Right ventricle myocardium inferior (tissue), 1 donor: ENCODE measurements at regions of chr11 and their contacts with region 1.

Region 1: DNA sequence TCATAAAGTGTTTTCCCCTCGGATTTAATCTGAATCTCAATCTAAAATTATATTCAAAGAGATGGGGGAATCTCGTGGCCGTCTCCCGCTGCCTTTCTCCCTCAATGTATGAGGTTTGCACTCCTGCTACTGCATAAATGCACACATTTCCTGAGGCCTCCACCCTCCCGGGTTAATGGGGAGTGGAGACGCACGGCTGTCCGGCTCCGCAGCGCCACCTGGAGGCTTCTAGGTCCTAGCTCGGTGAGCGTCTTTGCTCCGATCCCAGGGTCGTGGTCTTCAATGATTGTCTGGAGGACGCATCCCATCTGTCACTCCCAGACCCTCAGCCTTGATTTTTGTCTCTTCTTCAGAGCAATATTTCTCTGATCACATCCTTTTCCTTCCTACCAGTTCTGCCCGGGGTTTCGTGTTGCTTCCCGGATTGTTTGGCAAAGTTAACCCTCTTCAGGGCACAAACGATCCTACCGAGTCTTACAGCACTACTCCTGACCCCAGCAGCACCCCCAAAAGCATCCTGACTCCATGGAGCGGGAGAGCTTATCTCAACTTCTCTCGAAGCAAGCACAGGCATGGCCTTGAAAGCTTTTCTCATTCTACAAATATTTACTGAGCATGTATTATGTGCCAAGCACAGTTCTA is at the start of gene LMO1:
- DNase-seq: peak; percentile 86
- ATAC-seq: peak; percentile 71
- total RNA-seq, gene LMO1: 3.6 TPM

Region 2: GRCh38 chr11:8192016-8192895 is 71.6 kb before region 1 on chr11:
- intact Hi-C with region 1: loop called (anchors 2 kb)
- DNase-seq: no peak
- ATAC-seq: peak; percentile 74

Region 3: DNA sequence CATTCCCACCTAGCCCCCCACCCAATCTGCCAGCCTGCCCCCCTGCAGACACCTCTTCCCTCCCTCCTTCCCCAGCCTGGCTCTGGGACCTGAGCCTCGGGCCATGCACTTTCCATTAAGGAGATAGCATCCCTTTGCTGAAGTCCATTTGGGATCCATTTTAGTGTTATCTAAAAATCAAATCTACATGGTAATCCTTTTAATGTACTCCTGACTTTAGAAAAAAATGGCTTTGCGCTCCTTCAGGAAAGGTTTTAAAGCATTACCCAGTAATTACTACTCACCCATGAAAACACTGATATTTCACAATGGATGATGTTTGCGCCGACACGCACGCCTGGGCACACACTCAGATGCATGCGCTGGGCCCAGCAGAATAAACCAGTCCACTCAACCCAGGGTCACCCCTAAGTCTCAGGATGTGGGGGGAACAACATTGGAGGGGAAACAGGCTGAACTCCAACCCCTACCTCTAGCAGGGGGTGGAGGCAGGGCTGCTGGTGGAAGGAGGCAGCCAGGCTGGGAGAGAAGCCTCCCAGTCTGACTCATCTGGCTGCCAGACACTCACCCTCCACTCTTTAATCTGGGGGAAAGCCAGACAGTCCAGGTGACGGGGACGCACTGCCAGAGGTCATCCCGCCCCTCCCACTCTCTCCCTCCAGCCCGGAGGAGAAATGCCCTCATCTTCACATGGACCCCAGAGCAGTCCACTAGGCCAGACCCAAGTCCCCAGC is 30.0 kb before region 1 on chr11:
- intact Hi-C with region 1: no loop called
- DNase-seq: no peak
- ATAC-seq: peak; percentile 47

Region 4: DNA sequence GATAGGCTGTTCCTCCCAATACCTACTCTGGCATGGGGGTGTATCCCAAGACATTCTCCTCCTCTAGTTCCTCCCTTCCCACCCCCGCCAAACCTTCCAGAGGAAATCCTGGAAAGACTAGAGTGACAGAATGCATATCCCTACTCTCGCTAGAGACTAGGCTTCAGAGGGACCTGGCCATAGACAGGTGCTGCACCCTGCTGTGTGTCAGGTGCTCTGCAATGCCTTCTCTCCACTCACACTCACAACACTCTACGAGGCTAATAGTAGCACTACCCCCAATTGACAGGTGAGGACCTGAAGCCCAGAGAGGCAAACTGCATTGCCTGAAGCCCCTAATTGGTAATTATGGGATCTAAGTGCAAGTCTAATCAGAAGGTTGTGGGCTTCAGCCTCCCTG is 46.0 kb after region 1 on chr11:
- intact Hi-C with region 1: loop called (anchors 2 kb)
- DNase-seq: no peak
- ATAC-seq: peak; percentile 48

Region 5: DNA sequence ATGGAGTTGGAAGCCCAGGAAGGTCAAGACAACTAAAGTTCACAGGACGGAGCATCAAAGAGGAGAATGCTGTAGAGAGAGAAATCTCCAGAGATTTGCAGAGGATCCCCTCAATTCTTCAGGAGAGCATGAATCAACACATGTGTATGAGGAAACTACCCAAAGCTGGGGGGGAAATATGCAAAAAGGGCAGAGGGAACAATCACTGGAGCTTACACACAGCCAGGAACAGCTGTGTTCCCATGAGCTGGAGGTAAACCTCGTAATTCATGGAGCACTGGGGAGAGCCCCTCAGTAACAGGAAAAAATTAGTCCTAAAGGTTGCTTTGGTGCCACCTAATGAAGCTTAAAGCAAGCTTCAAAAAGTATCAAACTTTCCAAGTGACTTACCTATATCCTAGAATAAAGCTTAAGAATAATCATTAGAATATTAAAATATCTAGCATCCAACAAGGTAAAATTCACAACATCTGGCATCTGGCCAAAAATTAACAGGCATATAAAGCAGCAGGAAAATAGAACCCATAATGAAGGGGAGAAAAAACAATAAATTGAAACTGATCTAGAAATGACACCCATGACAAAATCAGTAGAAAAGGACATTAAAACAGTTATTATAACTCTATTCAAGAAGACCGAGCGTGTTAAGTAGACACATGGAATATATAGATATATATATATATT is 196.0 kb after region 1 on chr11:
- intact Hi-C with region 1: no loop called
- DNase-seq: no peak
- ATAC-seq: no peak